Right cardiac atrium (tissue), 5 donors: ENCODE measurements at regions of chr6 and their contacts with region 1.

Region 1: DNA sequence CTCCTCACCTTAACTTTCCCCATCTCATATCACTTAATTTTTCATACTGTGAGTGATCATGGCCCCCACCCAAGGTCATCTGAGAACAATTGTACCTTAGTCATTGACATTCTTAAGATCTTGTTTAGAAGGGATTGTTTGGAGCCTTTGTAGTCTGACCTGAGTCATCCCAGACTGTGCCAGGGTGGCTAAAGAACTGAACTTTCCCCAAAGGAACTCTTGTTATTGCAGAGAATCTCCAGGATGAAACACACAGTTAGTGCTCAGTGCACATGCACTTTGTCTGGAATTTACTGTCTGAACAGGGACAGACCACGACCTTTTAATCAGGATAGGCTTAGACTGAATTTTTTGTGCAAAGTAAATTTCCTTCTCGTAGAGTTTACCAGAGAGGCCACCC is 112.6 kb upstream of the CCN2 start:
- DNase-seq: peak in 1 of 3 donors; percentile 23
- ATAC-seq: peak; percentile 46 to 83
- H3K4me3 ChIP-seq: no peak overlapping the region
- H3K27ac ChIP-seq: peak overlapping the region; percentile 7
- H3K4me1 ChIP-seq: no peaks in the 10 kb centered on the region
- H3K27me3 ChIP-seq: no peaks in the 10 kb centered on the region

Region 2: DNA sequence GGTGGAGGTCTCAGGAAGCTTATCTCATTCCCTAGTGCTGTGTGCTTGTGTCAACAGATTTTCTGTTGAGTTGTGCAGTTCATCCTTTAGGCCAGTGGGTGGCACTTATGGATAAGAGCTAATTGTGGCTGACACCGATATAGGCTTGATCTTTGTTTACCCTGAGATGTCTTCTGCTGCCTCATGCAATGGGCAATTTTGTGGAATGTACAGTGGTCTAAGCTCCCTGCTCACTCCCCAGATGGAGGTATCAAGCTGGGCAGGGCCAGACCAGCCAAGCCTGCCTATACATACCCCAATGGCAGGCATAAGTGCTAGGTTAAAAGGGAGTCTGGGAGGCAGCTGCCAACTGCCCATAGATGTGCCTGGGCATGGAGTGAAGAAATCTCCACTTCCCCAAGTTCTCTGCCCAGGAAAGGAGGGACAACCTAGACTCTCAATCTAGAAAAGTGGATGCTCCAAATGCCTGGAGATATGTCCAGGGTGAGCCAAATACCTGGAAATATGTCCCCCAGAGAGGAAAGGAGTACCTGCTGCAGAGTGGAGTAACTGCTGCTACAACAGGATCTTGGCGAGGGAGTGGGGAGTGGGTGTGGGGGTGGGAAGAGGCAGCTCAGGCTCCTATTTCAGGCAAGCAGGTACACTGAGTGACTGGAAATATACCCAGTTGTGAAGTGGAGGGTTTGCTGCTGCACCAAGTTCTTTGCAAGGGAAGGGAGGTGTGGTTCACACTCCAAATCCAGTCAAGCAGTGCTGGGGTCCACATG is 543.9 kb before region 1 on chr6:
- intact Hi-C with region 1: no loop called
- DNase-seq: no peak
- ATAC-seq: peak in 1 of 2 donors; percentile 19
- H3K4me3 ChIP-seq: no peak overlapping the region
- H3K27ac ChIP-seq: no peak overlapping the region
- H3K4me1 ChIP-seq: no peaks in the 10 kb centered on the region
- H3K27me3 ChIP-seq: no peaks in the 10 kb centered on the region

Region 3: GRCh38 chr6:132131758-132132157 is 68.0 kb after region 1 on chr6:
- intact Hi-C with region 1: loop called in 1 of 4 experiments (anchors 2 kb)
- DNase-seq: peak; percentile 46 to 59 (median 49)
- ATAC-seq: peak; percentile 90 to 95
- H3K4me3 ChIP-seq: no peak overlapping the region
- H3K27ac ChIP-seq: peak overlapping the region; percentile 98
- H3K4me1 ChIP-seq: peaks cover 7% of the 10 kb centered on the region
- H3K27me3 ChIP-seq: no peaks in the 10 kb centered on the region

Region 4: DNA sequence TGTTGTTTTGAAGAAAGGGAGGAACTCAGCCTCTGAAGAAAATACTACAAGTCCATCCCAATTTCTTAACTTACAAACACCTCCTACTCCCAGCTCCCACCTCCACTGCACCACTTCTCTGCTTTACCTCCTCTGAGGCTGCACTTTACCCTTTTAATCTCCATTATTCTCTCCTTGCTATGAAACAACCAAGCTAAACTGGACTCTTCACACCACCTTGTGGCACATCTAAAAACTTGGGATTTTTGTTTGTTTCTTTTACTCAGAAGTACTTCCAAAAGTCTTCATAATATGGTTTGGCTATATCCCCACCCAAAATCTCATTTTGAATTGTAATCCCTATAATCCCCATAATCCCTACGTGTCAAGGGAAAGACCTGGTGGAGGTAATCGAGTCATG is 195.3 kb after region 1 on chr6:
- intact Hi-C with region 1: no loop called
- DNase-seq: no peak
- ATAC-seq: peak in 1 of 2 donors; percentile 29
- H3K4me3 ChIP-seq: no peak overlapping the region
- H3K27ac ChIP-seq: no peak overlapping the region
- H3K4me1 ChIP-seq: no peaks in the 10 kb centered on the region
- H3K27me3 ChIP-seq: no peaks in the 10 kb centered on the region